ENCODE measurements at regions of chr14 and their contacts with region 1.

Region 1: GRCh38 chr14:75654127-75654732 is 6.4 kb downstream of the ERG28 start:
- DNase-seq: peak; percentile 41 to 85 (median 71)
- ATAC-seq: peak; percentile 91 to 93 (median 92)
- H3K4me3 ChIP-seq: no peak overlapping the region
- H3K4me3 Mint-ChIP-seq: no peak overlapping the region
- H3K27ac ChIP-seq: no peak overlapping the region
- H3K27ac Mint-ChIP-seq: no peak overlapping the region
- H3K4me1 ChIP-seq: peaks cover 0 to 2% of the 10 kb centered on the region in 2 experiments
- H3K4me1 Mint-ChIP-seq: peaks cover 6 to 17% (median 8%) of the 10 kb centered on the region in 3 donors
- H3K27me3 ChIP-seq: no peaks in the 10 kb centered on the region
- H3K27me3 Mint-ChIP-seq: no peaks in the 10 kb centered on the region

Region 2: GRCh38 chr14:75307700-75308379 is 346.4 kb before region 1 on chr14:
- CTCF ChIA-PET with region 1: interaction called, 5 to 11 read pairs
- POLR2A ChIA-PET with region 1: no interaction called
- DNase-seq: peak in 33 of 35 experiments; percentile 25 to 85 (median 63)
- ATAC-seq: peak; percentile 43 to 78 (median 64)
- H3K4me3 ChIP-seq: no peak overlapping the region
- H3K4me3 Mint-ChIP-seq: no peak overlapping the region
- H3K27ac ChIP-seq: no peak overlapping the region
- H3K27ac Mint-ChIP-seq: no peak overlapping the region
- H3K4me1 ChIP-seq: peaks cover 0 to 11% of the 10 kb centered on the region in 2 experiments
- H3K4me1 Mint-ChIP-seq: peaks cover 3 to 10% (median 7%) of the 10 kb centered on the region in 3 donors
- H3K27me3 ChIP-seq: no peaks in the 10 kb centered on the region
- H3K27me3 Mint-ChIP-seq: no peaks in the 10 kb centered on the region

Region 3: DNA sequence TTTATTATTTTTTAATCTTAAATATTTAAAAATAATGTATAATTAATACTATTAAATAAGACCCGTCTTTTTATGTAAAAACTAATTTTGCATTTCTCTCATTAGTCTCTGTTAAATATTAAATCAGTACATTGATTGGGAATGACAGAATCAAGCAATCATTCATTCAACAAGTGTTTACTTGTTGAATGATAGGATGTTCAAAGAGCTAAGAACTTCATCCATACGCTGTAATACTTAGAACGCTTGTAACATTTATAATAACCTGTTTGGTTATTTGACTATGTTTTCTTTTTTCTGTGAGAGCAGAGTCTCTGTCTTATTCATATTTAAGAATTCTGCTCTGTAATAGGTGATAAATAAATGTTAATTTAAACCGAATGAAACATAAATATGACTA is 134.8 kb before region 1 on chr14:
- CTCF ChIA-PET with region 1: interaction called in 1 of 2 experiments, 10 read pairs
- POLR2A ChIA-PET with region 1: no interaction called
- DNase-seq: no peak
- ATAC-seq: no peak
- H3K4me3 ChIP-seq: no peak overlapping the region
- H3K4me3 Mint-ChIP-seq: no peak overlapping the region
- H3K27ac ChIP-seq: no peak overlapping the region
- H3K27ac Mint-ChIP-seq: no peak overlapping the region
- H3K4me1 ChIP-seq: peaks cover 21 to 58% of the 10 kb centered on the region in 2 experiments
- H3K4me1 Mint-ChIP-seq: peaks cover 61 to 75% (median 67%) of the 10 kb centered on the region in 3 donors
- H3K27me3 ChIP-seq: no peaks in the 10 kb centered on the region
- H3K27me3 Mint-ChIP-seq: no peaks in the 10 kb centered on the region

Region 4: DNA sequence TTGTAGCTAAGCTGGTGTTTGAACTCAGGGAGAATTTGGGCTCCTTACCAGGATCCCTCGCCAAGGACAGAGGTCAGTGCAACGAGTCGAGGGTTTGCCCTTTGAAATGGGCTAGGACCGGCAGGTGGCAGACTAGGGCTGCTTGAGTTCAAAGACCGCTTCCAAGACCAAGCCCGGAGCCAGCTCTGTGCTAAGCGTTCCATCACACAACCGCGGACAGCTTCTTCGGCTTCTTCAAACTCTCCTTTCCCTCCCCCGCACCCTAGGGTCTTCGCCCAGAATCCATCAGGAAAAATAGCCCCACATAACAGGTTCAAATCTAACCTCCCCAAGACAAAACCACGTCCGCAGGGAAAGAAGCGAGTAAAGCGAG is 76.5 kb before region 1 on chr14:
- CTCF ChIA-PET with region 1: interaction called, 10 to 89 read pairs
- POLR2A ChIA-PET with region 1: no interaction called
- DNase-seq: peak; percentile 15 to 78 (median 58)
- ATAC-seq: peak; percentile 84 to 91 (median 86)
- H3K4me3 ChIP-seq: peak overlapping the region; percentile 74 to 86
- H3K4me3 Mint-ChIP-seq: no peak overlapping the region
- H3K27ac ChIP-seq: peak overlapping the region; percentile 36
- H3K27ac Mint-ChIP-seq: peak overlapping the region; percentile 77 to 86
- H3K4me1 ChIP-seq: peaks cover 7 to 26% of the 10 kb centered on the region in 2 experiments
- H3K4me1 Mint-ChIP-seq: peaks cover 4 to 11% (median 7%) of the 10 kb centered on the region in 3 donors
- H3K27me3 ChIP-seq: peaks cover 0 to 2% of the 10 kb centered on the region in 2 experiments
- H3K27me3 Mint-ChIP-seq: no peaks in the 10 kb centered on the region